Spleen (tissue), 13 donors: ENCODE measurements at regions of chr17 and their contacts with region 1.

Region 1: GRCh38 chr17:13230350-13231264 is 212.8 kb upstream of the ELAC2 start:
- DNase-seq: no peak
- H3K4me3 ChIP-seq: no peak overlapping the region
- H3K27ac ChIP-seq: no peak overlapping the region
- H3K4me1 ChIP-seq: no peaks in the 10 kb centered on the region
- H3K27me3 ChIP-seq: no peaks in the 10 kb centered on the region
- CTCF ChIP-seq: no peak
- POLR2A ChIP-seq: no peak

Region 2: DNA sequence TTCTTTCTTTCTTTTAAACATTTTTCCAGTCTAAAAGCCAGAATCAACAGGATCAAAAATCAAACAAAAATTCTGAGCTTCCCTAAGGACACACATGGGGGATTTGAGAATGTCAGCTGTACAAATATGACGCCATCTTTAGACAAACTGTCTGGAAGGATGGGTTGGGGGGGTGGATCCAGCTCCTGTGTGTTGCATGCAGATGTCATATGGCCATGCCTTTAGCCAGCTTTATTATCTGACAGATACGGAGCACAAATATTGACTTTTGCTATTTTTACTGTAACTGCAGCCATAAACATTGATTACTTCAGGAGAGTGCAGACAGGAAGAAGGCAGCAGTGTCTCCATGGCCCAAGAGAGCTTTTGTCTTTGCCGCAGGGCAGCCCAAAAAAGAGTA is 66.6 kb after region 1 on chr17:
- intact Hi-C with region 1: loop called (anchors 10 kb)
- DNase-seq: no peak
- H3K4me3 ChIP-seq: no peak overlapping the region
- H3K27ac ChIP-seq: no peak overlapping the region
- H3K4me1 ChIP-seq: no peaks in the 10 kb centered on the region
- H3K27me3 ChIP-seq: no peaks in the 10 kb centered on the region
- CTCF ChIP-seq: no peak
- POLR2A ChIP-seq: no peak